CD8-positive, alpha-beta T cell (primary cell): ENCODE measurements at regions of chr14 and their contacts with region 1.

Region 1: GRCh38 chr14:56150645-56151345 is 32.6 kb downstream of the PELI2 start:
- DNase-seq: peak in 2 of 9 experiments; percentile 16 to 30
- ATAC-seq: no peak
- H3K4me3 ChIP-seq: no peak overlapping the region
- H3K4me3 Mint-ChIP-seq: no peak overlapping the region
- H3K27ac ChIP-seq: no peak overlapping the region
- H3K27ac Mint-ChIP-seq: no peak overlapping the region
- H3K4me1 ChIP-seq: peaks cover 6% of the 10 kb centered on the region
- H3K4me1 Mint-ChIP-seq: peaks cover 50% of the 10 kb centered on the region
- H3K27me3 ChIP-seq: peaks cover 0 to 2% of the 10 kb centered on the region in 2 experiments
- H3K27me3 Mint-ChIP-seq: no peaks in the 10 kb centered on the region
- CTCF ChIP-seq: no peak

Region 2: GRCh38 chr14:55731881-55732498 is 418.8 kb before region 1 on chr14:
- CTCF ChIA-PET with region 1: no interaction called
- POLR2A ChIA-PET with region 1: no interaction called
- intact Hi-C with region 1: loop called in 1 of 2 experiments (anchors 10 kb)
- DNase-seq: peak; percentile 18 to 61 (median 56)
- ATAC-seq: no peak
- H3K4me3 ChIP-seq: no peak overlapping the region
- H3K4me3 Mint-ChIP-seq: no peak overlapping the region
- H3K27ac ChIP-seq: no peak overlapping the region
- H3K27ac Mint-ChIP-seq: no peak overlapping the region
- H3K4me1 ChIP-seq: no peaks in the 10 kb centered on the region
- H3K4me1 Mint-ChIP-seq: no peaks in the 10 kb centered on the region
- H3K27me3 ChIP-seq: no peaks in the 10 kb centered on the region
- H3K27me3 Mint-ChIP-seq: no peaks in the 10 kb centered on the region
- CTCF ChIP-seq: peak; percentile 65

Region 3: DNA sequence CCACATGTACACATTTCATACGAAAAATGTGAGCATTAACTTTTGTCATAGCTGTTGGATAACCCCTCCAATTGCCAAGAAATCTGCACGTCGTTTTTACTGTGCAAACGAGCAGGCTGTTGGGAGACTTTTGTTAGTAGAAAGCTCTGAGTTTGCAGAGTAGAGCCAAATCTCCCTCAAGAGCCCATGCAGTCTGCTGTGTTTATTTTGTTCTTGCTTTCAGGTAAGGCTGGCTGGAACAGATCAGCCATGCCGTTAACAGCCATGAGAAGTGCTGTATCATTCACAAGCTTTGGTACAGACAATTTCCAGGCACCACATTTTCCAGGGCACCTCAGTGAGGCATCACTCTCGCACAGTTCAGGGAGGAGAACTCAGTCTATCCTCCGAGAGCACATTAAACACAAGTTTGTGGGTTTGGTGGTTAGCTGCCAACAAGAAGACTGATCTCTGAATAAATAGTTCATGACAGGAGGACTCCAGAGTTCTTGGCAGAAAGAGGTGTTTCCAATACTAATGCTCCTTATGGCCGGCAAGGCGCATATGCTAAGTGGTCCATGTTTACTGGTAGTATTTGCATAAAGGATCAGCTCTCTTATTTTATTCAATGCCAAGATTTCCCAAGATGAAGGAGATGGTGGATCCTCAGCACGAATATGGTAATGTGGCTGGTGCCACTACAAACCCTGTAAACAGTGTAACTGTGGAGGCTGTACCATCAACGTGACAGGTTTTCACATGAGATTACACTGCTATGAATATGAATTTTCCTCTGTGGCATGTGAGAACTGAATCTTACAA is 62.9 kb before region 1 on chr14:
- CTCF ChIA-PET with region 1: no interaction called
- POLR2A ChIA-PET with region 1: no interaction called
- intact Hi-C with region 1: no loop called
- DNase-seq: no peak
- ATAC-seq: no peak
- H3K4me3 ChIP-seq: no peak overlapping the region
- H3K4me3 Mint-ChIP-seq: no peak overlapping the region
- H3K27ac ChIP-seq: no peak overlapping the region
- H3K27ac Mint-ChIP-seq: no peak overlapping the region
- H3K4me1 ChIP-seq: no peaks in the 10 kb centered on the region
- H3K4me1 Mint-ChIP-seq: no peaks in the 10 kb centered on the region
- H3K27me3 ChIP-seq: no peaks in the 10 kb centered on the region
- H3K27me3 Mint-ChIP-seq: peaks cover 24% of the 10 kb centered on the region
- CTCF ChIP-seq: no peak

Region 4: GRCh38 chr14:56100556-56100955 is 50.2 kb before region 1 on chr14:
- CTCF ChIA-PET with region 1: no interaction called
- POLR2A ChIA-PET with region 1: no interaction called
- intact Hi-C with region 1: no loop called
- DNase-seq: no peak
- ATAC-seq: no peak
- H3K4me3 ChIP-seq: no peak overlapping the region
- H3K4me3 Mint-ChIP-seq: no peak overlapping the region
- H3K27ac ChIP-seq: no peak overlapping the region
- H3K27ac Mint-ChIP-seq: no peak overlapping the region
- H3K4me1 ChIP-seq: no peaks in the 10 kb centered on the region
- H3K4me1 Mint-ChIP-seq: no peaks in the 10 kb centered on the region
- H3K27me3 ChIP-seq: no peaks in the 10 kb centered on the region
- H3K27me3 Mint-ChIP-seq: peaks cover 22% of the 10 kb centered on the region
- CTCF ChIP-seq: no peak

Region 5: GRCh38 chr14:56555921-56556570 is 405.3 kb after region 1 on chr14:
- CTCF ChIA-PET with region 1: no interaction called
- POLR2A ChIA-PET with region 1: no interaction called
- intact Hi-C with region 1: no loop called
- DNase-seq: peak in 2 of 9 experiments; percentile 16 to 29
- ATAC-seq: no peak
- H3K4me3 ChIP-seq: no peak overlapping the region
- H3K4me3 Mint-ChIP-seq: no peak overlapping the region
- H3K27ac ChIP-seq: no peak overlapping the region
- H3K27ac Mint-ChIP-seq: no peak overlapping the region
- H3K4me1 ChIP-seq: no peaks in the 10 kb centered on the region
- H3K4me1 Mint-ChIP-seq: no peaks in the 10 kb centered on the region
- H3K27me3 ChIP-seq: peaks cover 0 to 1% of the 10 kb centered on the region in 2 experiments
- H3K27me3 Mint-ChIP-seq: peaks cover 41% of the 10 kb centered on the region
- CTCF ChIP-seq: peak; percentile 25